PC-9 (cell line): ENCODE measurements at regions of chr7 and their contacts with region 1.

Region 1: DNA sequence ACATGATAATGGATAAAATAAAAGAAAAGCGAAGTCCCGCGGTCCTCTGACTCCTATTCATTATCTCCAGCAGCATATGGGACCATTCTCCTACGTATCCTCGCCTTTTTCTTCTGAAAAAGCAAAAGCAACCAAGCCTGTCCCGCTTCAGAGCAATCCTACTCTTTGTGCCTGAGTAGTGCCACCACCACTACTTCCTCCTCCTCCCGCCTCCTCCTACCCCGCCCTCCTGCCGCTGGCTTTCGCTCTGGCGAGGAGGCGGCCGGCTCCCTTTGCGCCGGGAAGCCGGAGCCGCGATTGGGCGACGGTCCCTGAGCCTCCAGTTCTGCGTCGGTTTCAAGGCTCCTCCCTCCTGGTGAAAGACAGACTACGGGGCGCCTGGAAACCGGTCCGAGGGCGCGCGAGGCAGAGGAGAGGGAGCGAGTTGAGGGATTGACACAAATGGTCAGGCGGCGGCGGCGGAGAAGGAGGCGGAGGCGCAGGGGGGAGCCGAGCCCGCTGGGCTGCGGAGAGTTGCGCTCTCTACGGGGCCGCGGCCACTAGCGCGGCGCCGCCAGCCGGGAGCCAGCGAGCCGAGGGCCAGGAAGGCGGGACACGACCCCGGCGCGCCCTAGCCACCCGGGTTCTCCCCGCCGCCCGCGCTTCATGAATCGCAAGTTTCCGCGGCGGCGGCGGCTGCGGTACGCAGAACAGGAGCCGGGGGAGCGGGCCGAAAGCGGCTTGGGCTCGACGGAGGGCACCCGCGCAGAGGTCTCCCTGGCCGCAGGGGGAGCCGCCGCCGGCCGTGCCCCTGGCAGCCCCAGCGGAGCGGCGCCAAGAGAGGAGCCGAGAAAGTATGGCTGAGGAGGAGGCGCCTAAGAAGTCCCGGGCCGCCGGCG is at the start of gene FZD1:
- DNase-seq: peak; percentile 87 to 98
- H3K4me3 ChIP-seq: peak within 1 kb of the TSS; percentile 60
- H3K27ac ChIP-seq: no peak within 1 kb of the TSS
- H3K4me1 ChIP-seq: 0 out of 2 replicates have a peak, but pooled peaks cover 6% of the 10 kb centered on the region
- H3K27me3 ChIP-seq: peaks cover 17% of the 10 kb centered on the region; the same call in 1 of the 2 replicates
- CTCF ChIP-seq: no peak
- total RNA-seq, gene FZD1: 2.6 and 2.8 TPM in 2 replicates

Region 2: DNA sequence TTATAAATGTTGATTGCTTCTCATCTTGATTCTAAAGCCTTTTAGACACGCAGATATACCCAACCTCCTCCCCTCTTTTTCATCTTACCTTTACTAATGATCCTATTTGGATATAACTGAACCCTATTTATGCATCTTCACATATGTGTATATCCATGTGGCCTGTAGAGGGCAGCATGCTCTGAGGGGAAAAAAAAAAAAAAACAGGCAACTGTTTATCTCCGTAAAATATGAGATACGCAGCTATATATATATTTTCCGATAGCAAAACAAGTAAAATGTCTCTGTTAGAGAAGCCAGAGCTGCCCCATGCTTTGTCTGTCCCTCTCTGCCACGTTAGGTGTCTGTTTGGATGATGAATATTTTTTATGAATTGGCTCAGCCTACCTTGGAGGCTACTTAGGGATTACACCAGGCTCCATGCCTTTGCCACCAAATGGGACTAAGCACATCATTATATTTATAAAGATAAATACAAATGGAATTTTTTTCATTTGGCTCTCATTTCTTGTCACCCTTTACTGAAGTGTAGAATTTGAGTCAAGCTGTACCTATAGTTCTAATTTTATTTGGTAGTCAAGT is 174.8 kb before region 1 on chr7:
- CTCF ChIA-PET with region 1: interaction called, 4 read pairs
- POLR2A ChIA-PET with region 1: no interaction called
- intact Hi-C with region 1: loop called (anchors 1 kb)
- DNase-seq: peak in 1 of 2 experiments; percentile 19
- H3K4me3 ChIP-seq: no peak overlapping the region
- H3K27ac ChIP-seq: no peak overlapping the region
- H3K4me1 ChIP-seq: no peaks in the 10 kb centered on the region
- H3K27me3 ChIP-seq: no peaks in the 10 kb centered on the region
- CTCF ChIP-seq: peak; percentile 84

Region 3: DNA sequence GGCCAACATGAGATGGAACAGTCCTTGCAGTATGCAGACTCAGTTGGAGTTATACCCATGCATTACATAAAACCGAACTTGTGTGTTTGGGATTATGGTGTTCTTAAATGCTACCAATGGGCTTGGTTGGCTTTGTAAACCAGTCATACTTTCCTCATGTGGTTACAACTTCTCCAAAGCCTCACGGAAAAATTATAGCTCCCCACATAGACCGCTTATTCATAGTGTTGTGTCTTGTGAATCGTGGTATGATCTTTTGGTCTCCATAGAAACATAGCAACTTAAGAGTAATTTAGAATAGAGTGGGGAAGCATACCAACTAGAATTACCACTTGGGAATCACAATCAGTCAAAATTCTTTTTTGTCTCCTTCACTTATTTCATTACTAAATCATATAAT is 112.4 kb before region 1 on chr7:
- CTCF ChIA-PET with region 1: no interaction called
- POLR2A ChIA-PET with region 1: no interaction called
- intact Hi-C with region 1: loop called (anchors 5 kb)
- DNase-seq: no peak
- H3K4me3 ChIP-seq: no peak overlapping the region
- H3K27ac ChIP-seq: no peak overlapping the region
- H3K4me1 ChIP-seq: no peaks in the 10 kb centered on the region
- H3K27me3 ChIP-seq: no peaks in the 10 kb centered on the region
- CTCF ChIP-seq: no peak

Region 4: GRCh38 chr7:91249506-91250240 is 14.6 kb before region 1 on chr7:
- CTCF ChIA-PET with region 1: interaction called, 4 read pairs
- POLR2A ChIA-PET with region 1: no interaction called
- intact Hi-C with region 1: loop called (anchors 1 kb)
- DNase-seq: peak; percentile 66 to 68
- H3K4me3 ChIP-seq: no peak overlapping the region
- H3K27ac ChIP-seq: no peak overlapping the region
- H3K4me1 ChIP-seq: no peaks in the 10 kb centered on the region
- H3K27me3 ChIP-seq: no peaks in the 10 kb centered on the region
- CTCF ChIP-seq: no peak

Region 5: DNA sequence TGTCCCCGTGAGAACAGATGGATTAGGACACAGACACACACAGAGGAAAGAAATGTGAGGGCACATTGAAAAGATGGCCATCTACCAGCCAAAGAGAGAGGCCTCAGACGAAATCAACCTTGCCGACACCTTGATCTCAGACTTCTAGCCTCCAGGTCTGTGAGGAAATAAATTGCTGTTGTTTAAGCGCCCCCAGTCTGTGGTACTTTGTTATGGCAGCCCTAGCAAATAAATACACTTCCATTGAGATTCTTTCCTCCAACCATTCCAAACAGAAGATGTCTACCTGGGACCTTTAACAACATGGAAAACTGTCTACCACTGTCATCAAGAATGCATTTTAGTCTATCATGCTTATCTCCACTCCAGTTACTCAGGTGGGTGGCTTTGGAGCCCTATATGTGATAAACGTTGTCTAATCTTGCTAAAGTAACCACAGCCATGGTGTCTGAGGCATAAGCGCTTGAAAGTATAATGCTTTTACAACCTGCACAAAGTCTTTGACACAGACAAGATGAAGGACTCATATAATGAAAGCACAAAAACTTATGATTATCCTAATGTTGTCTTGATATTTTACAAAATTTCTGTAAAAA is 371.9 kb after region 1 on chr7:
- CTCF ChIA-PET with region 1: no interaction called
- POLR2A ChIA-PET with region 1: no interaction called
- intact Hi-C with region 1: loop called (anchors 10 kb)
- DNase-seq: peak in 1 of 2 experiments; percentile 35
- H3K4me3 ChIP-seq: no peak overlapping the region
- H3K27ac ChIP-seq: no peak overlapping the region
- H3K4me1 ChIP-seq: no peaks in the 10 kb centered on the region
- H3K27me3 ChIP-seq: no peaks in the 10 kb centered on the region
- CTCF ChIP-seq: peak; percentile 57